SK-N-SH (cell line): ENCODE measurements at regions of chr2 and their contacts with region 1.

Region 1: GRCh38 chr2:175251425-175252041 is 70.0 kb upstream of the ATP5MC3 start:
- DNase-seq: peak; percentile 40
- H3K4me3 ChIP-seq: no peak overlapping the region; a peak in 1 of 4 replicates
- H3K27ac ChIP-seq: no peak overlapping the region
- H3K4me1 ChIP-seq: no peaks in the 10 kb centered on the region
- H3K27me3 ChIP-seq: no peaks in the 10 kb centered on the region
- CTCF ChIP-seq: peak; percentile 86
- EP300 ChIP-seq: no peak
- RAD21 ChIP-seq: peak; percentile 69

Region 2: DNA sequence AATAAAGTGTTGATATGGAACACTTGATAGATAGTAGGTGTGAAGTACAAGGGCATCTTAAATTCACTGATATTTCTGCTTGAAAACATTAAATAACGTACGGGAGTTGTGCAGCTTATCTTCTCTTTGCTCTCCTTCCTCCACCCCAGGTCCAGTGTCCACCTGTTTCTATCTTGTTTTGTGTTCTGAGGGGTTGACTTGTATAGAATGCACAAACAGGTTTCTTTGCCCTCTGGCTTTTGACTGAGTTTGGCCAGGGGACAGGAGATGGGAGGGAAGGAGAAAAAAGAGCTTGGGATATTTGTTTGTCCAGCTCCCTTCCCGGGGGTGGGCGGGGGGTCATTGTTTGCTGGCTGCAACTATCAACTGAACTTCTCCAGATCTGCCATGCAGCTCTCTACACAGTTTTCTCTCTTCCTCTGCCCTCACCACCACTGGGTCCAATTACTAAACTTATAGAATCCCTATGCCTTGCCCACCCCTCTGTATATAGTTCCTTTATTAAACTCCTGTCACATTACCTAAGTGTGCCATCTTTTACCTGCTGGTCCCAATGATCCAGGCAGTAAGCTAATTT is 213.7 kb before region 1 on chr2:
- CTCF ChIA-PET with region 1: no interaction called
- POLR2A ChIA-PET with region 1: no interaction called
- DNase-seq: no peak
- H3K4me3 ChIP-seq: no peak overlapping the region
- H3K27ac ChIP-seq: no peak overlapping the region
- H3K4me1 ChIP-seq: no peaks in the 10 kb centered on the region
- H3K27me3 ChIP-seq: no peaks in the 10 kb centered on the region
- CTCF ChIP-seq: no peak
- EP300 ChIP-seq: no peak
- RAD21 ChIP-seq: no peak

Region 3: GRCh38 chr2:175203621-175204496 is 47.7 kb before region 1 on chr2:
- CTCF ChIA-PET with region 1: interaction called, 22 read pairs
- POLR2A ChIA-PET with region 1: no interaction called
- DNase-seq: peak; percentile 56
- H3K4me3 ChIP-seq: peak overlapping the region in 1 of 2 experiments; percentile 26; a peak in 1 of 4 replicates
- H3K27ac ChIP-seq: no peak overlapping the region
- H3K4me1 ChIP-seq: peaks cover 0 to 8% of the 10 kb centered on the region in 2 experiments; a peak in 2 of 4 replicates
- H3K27me3 ChIP-seq: no peaks in the 10 kb centered on the region
- CTCF ChIP-seq: peak; percentile 67
- EP300 ChIP-seq: peak in 1 of 2 experiments; percentile 18; a peak in 1 of 4 replicates
- RAD21 ChIP-seq: peak; percentile 73

Region 4: GRCh38 chr2:175282290-175282689 is 30.8 kb after region 1 on chr2:
- CTCF ChIA-PET with region 1: interaction called, 168 read pairs
- POLR2A ChIA-PET with region 1: no interaction called
- DNase-seq: peak; percentile 64
- H3K4me3 ChIP-seq: no peak overlapping the region
- H3K27ac ChIP-seq: no peak overlapping the region
- H3K4me1 ChIP-seq: no peaks in the 10 kb centered on the region; a peak in 2 of 4 replicates
- H3K27me3 ChIP-seq: no peaks in the 10 kb centered on the region
- CTCF ChIP-seq: peak; percentile 57
- EP300 ChIP-seq: no peak
- RAD21 ChIP-seq: peak; percentile 73

Region 5: GRCh38 chr2:175326801-175327200 is 75.3 kb after region 1 on chr2:
- CTCF ChIA-PET with region 1: interaction called, 17 read pairs
- POLR2A ChIA-PET with region 1: no interaction called
- DNase-seq: no peak
- H3K4me3 ChIP-seq: no peak overlapping the region
- H3K27ac ChIP-seq: no peak overlapping the region
- H3K4me1 ChIP-seq: no peaks in the 10 kb centered on the region
- H3K27me3 ChIP-seq: no peaks in the 10 kb centered on the region
- CTCF ChIP-seq: no peak
- EP300 ChIP-seq: no peak
- RAD21 ChIP-seq: no peak

Region 6: DNA sequence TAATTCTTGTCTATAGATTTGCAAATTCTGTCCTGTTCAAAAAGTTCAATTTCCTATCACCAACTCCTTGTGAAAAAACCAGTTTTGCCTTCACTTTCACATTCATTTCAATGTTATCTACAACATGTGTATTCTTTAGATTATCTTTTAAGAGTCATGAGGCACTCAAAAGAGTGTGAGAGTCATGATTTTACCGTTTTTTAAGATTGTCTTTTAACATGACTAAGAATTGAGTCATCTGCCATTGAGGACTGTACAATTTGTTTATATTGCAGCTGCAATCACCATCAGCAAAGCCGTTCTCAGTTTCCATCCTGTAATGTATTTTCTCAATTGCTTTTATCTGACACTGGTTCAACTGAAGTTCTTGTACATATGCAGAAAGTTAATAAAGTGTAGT is 474.7 kb after region 1 on chr2:
- CTCF ChIA-PET with region 1: no interaction called
- POLR2A ChIA-PET with region 1: no interaction called
- DNase-seq: no peak
- H3K4me3 ChIP-seq: no peak overlapping the region
- H3K27ac ChIP-seq: no peak overlapping the region
- H3K4me1 ChIP-seq: no peaks in the 10 kb centered on the region
- H3K27me3 ChIP-seq: no peaks in the 10 kb centered on the region; the same call in 1 of the 2 replicates
- CTCF ChIP-seq: no peak
- EP300 ChIP-seq: no peak
- RAD21 ChIP-seq: no peak

Region 7: DNA sequence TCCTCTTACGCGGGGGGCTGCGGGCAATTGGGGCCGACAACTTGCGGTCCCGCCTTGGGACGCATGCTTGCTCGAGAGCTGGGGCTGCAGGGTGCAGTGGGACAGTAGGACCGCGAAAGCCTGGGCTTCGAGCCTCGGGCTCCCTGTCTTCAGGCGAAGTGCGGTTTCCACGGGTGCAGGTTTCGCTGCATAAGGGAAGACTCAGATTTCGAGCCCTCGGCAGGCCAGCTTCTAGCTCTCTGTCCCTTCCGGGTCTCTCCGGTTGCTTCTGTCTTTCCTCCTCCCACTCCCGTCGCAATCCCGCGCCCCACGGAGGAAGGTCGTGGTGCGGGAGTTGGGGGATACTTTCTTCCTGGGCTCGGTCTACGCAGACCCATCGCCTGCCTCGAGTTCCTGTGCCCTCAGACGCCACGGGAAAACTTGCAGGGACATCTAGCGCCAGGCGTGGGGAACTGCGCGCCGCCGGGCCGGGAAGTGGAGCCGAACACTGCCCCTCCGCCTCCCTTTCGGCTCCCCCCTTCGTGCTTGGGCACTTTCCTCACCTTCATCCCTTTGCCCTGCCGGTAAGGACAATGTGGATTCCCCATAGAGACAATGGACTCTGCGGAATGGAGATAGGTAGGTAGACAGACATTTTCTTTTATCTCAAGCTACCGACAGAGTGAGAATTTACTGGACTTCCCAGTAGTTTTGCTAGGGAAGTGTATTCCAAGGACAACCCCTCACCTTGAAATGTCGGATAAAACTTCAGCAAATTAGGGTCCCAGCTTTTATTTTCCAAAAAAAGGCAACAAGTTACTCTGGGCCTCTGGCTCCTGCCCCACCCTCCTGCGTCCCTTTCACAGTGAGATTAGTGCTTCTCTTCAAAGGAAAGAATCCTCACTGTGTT is 836.8 kb after region 1 on chr2:
- CTCF ChIA-PET with region 1: interaction called, 65 read pairs
- POLR2A ChIA-PET with region 1: no interaction called
- DNase-seq: peak; percentile 86
- H3K4me3 ChIP-seq: peak overlapping the region; percentile 40 to 52
- H3K27ac ChIP-seq: no peak overlapping the region
- H3K4me1 ChIP-seq: peaks cover 0 to 24% of the 10 kb centered on the region in 2 experiments; a peak in 1 of 4 replicates
- H3K27me3 ChIP-seq: peaks cover 95% of the 10 kb centered on the region
- CTCF ChIP-seq: peak; percentile 78
- EP300 ChIP-seq: no peak
- RAD21 ChIP-seq: peak; percentile 75